T-cell (primary cell): ENCODE measurements at regions of chr2 and their contacts with region 1.

Region 1: DNA sequence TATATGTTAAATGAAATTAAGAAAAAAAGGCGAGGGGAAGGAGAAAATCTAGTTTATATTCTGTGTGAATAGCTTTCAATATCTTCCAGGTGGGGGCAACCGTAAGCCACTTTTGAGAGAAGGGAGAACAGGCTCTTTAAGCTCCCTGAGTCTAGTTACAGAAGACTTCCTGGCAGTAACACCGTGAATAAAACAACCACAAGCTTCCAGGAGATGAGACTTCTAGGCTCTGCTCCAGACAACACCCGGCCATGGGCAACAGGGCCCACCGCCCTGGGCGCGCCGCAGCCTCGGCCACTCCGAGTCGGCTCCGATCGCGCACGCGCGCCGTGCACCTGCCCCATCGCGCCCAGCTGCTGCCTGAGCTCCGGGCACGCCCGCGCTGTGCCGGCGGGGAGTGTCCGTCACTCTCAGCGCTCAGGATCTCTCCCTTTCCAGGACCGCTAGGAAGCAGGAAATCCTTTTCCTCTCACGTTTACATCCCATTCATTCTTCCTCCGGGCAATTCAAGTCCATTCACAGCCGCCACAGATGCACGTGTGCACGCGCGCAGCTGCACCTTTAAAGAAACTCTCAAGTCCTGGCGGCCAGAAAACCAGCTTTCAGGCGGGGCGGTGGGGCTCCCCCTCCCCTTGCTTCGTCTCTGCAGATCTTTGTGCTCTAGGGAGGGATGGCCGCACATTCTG is 19.4 kb upstream of the PAX3 start:
- DNase-seq: peak in 2 of 35 experiments; percentile 14 to 50
- ATAC-seq: peak in 3 of 4 experiments; percentile 47 to 66 (median 54)
- H3K4me3 ChIP-seq: peak overlapping the region; percentile 46 to 70
- H3K4me3 Mint-ChIP-seq: peak overlapping the region; percentile 65 to 78 (median 73)
- H3K27ac ChIP-seq: no peak overlapping the region
- H3K27ac Mint-ChIP-seq: no peak overlapping the region
- H3K4me1 ChIP-seq: peaks cover 0 to 18% of the 10 kb centered on the region in 2 experiments
- H3K4me1 Mint-ChIP-seq: peaks cover 4 to 13% (median 9%) of the 10 kb centered on the region in 3 donors
- H3K27me3 ChIP-seq: peaks cover 13 to 23% of the 10 kb centered on the region in 2 experiments
- H3K27me3 Mint-ChIP-seq: peaks cover 56 to 70% of the 10 kb centered on the region in 2 donors

Region 2: DNA sequence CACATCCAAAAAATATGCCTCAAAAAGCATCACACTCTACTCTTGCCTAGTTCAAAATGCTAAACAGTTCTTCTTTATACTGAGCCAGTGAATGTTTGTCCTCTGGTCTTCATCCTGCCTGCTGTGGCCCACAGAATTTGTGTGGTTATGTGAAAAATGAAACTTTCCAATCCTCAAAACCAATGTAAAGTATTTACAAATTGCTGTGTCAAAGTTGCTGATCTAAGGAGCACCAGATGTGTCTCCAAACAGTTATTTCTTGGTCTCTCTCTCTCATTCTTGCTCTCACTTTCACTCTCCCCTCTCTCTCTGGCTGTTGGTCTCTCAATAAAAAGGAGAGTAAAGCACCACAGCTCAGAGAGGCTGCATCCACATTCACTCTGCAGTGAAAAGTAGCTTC is 769.0 kb before region 1 on chr2:
- CTCF ChIA-PET with region 1: no interaction called
- POLR2A ChIA-PET with region 1: no interaction called
- DNase-seq: no peak
- ATAC-seq: no peak
- H3K4me3 ChIP-seq: no peak overlapping the region
- H3K4me3 Mint-ChIP-seq: no peak overlapping the region
- H3K27ac ChIP-seq: no peak overlapping the region
- H3K27ac Mint-ChIP-seq: peak overlapping the region in 1 of 2 donors; percentile 0
- H3K4me1 ChIP-seq: no peaks in the 10 kb centered on the region
- H3K4me1 Mint-ChIP-seq: peaks cover 15 to 55% (median 20%) of the 10 kb centered on the region in 3 donors
- H3K27me3 ChIP-seq: no peaks in the 10 kb centered on the region
- H3K27me3 Mint-ChIP-seq: no peaks in the 10 kb centered on the region

Region 3: GRCh38 chr2:222424729-222425671 is 106.8 kb after region 1 on chr2:
- CTCF ChIA-PET with region 1: interaction called in 1 of 2 experiments, 5 read pairs
- POLR2A ChIA-PET with region 1: interaction called in 1 of 2 experiments, 16 read pairs
- DNase-seq: peak in 12 of 35 experiments; percentile 4 to 58 (median 13)
- ATAC-seq: peak; percentile 38 to 50 (median 46)
- H3K4me3 ChIP-seq: peak overlapping the region; percentile 35 to 58
- H3K4me3 Mint-ChIP-seq: peak overlapping the region; percentile 80 to 87 (median 85)
- H3K27ac ChIP-seq: peak overlapping the region; percentile 56
- H3K27ac Mint-ChIP-seq: peak overlapping the region; percentile 59 to 64
- H3K4me1 ChIP-seq: peaks cover 0 to 24% of the 10 kb centered on the region in 2 experiments
- H3K4me1 Mint-ChIP-seq: peaks cover 23 to 41% (median 37%) of the 10 kb centered on the region in 3 donors
- H3K27me3 ChIP-seq: peaks cover 14 to 21% of the 10 kb centered on the region in 2 experiments
- H3K27me3 Mint-ChIP-seq: peaks cover 36 to 46% of the 10 kb centered on the region in 2 donors

Region 4: GRCh38 chr2:222561817-222562645 is 243.9 kb after region 1 on chr2:
- CTCF ChIA-PET with region 1: interaction called in 1 of 2 experiments, 20 read pairs
- POLR2A ChIA-PET with region 1: no interaction called
- DNase-seq: peak in 8 of 35 experiments; percentile 1 to 50 (median 6)
- ATAC-seq: peak in 2 of 4 experiments; percentile 33 to 35
- H3K4me3 ChIP-seq: no peak overlapping the region
- H3K4me3 Mint-ChIP-seq: no peak overlapping the region
- H3K27ac ChIP-seq: no peak overlapping the region
- H3K27ac Mint-ChIP-seq: no peak overlapping the region
- H3K4me1 ChIP-seq: no peaks in the 10 kb centered on the region
- H3K4me1 Mint-ChIP-seq: no peaks in the 10 kb centered on the region
- H3K27me3 ChIP-seq: no peaks in the 10 kb centered on the region
- H3K27me3 Mint-ChIP-seq: peaks cover 1 to 2% of the 10 kb centered on the region in 2 donors